ENCODE measurements at regions of chr17 and their contacts with region 1.

Region 1: DNA sequence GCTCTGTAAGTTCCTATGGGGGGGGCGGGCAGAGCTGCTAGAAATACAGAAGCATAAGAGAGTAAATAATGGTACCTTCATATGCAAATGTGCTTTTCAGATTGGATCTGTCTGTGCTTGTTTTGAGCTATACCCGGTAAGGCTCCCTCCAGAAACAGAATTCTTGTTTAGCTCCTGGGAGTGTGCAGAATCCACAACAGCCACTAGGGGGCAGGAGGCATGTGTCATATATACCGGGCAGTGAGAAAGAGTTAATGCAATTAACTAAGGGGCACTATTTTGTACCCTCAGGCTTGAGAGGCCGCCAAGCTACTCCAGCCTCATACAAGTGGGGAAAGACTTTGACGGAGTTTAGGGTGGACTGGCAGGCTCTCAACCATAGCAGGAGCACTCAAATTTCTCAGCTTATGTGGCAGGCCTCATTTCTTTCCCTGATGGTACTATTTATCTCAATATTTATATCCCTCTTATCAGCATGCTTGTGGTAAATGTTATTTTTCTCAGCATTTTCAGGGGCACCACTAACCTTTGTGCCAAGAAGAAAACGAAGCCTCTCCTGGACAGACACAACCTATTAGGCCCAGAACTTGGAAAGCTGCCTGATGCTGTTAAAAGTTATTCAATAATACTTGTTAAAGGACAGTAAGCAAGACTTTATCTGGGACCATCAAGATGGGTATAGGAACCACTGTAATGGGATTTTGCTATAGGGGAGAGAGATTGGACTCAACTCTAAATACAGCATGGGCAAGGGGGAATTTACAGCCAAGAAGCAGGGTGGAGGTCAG is 10.7 kb upstream of the CENPV start:
- DNase-seq: peak; percentile 85
- ATAC-seq: peak; percentile 98
- H3K4me3 Mint-ChIP-seq: no peak overlapping the region
- H3K27ac Mint-ChIP-seq: no peak overlapping the region
- H3K4me1 Mint-ChIP-seq: 0 out of 2 replicates have a peak, but pooled peaks cover 3% of the 10 kb centered on the region
- H3K27me3 Mint-ChIP-seq: peaks cover 3% of the 10 kb centered on the region; the same call in 1 of the 2 replicates
- CTCF ChIP-seq: peak; percentile 85

Region 2: DNA sequence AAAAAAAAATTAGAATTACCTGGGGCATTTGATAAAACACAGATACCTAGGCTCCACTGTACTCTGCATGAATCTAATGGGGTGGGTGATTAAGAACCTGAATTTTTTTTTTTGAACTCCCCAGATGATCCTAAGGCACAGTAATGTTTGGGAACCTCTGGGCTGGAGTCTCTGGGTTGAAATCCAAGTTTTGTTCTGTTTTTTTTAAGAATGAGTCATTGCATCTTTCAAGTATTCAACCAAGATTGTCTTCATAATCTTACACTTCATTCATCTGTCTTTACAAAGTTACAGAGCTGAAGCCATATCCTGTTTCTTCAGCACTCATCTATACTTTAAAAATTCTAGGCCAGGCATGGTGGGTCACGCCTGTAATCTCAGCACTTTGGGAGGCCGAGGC is 94.3 kb before region 1 on chr17:
- CTCF ChIA-PET with region 1: no interaction called
- POLR2A ChIA-PET with region 1: no interaction called
- DNase-seq: no peak
- ATAC-seq: no peak
- H3K4me3 Mint-ChIP-seq: no peak overlapping the region
- H3K27ac Mint-ChIP-seq: no peak overlapping the region
- H3K4me1 Mint-ChIP-seq: no peaks in the 10 kb centered on the region
- H3K27me3 Mint-ChIP-seq: no peaks in the 10 kb centered on the region
- CTCF ChIP-seq: no peak

Region 3: DNA sequence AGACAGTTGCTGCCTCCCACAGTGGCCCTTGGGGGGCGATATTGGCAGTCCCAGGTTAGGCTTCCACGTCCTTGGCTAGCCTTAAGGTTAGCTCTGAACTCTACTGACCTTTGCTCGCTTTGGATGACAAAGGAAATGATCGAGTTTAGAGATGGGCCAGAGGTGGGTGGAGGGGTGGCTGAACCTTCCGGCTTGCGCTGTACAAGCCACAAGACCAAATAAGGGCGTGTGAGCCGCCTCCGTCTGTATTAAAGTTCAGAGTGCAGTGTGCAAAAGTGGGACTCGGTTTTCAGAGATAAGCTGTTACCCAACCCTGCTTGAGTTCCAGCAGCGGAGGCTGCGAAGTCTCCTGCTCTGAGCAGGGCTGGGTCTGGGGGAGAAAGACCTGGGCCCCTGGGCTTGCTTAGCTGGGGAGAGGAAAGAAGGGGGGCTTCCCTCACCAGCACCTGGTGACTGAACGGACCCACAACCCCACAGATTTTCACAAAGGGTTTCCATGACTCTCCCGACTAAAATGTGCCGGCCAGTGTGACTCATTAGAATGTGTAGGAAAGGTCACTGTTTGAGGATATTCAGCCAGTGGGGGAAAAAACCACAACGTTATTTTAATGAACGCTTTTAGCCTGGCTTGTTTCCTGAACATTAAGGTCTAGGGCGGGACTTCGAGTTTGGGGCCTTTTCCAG is 77.8 kb before region 1 on chr17:
- CTCF ChIA-PET with region 1: interaction called, 17 read pairs
- POLR2A ChIA-PET with region 1: no interaction called
- DNase-seq: peak; percentile 81
- ATAC-seq: peak; percentile 99
- H3K4me3 Mint-ChIP-seq: peak overlapping the region; percentile 47
- H3K27ac Mint-ChIP-seq: no peak overlapping the region
- H3K4me1 Mint-ChIP-seq: peaks cover 18% of the 10 kb centered on the region
- H3K27me3 Mint-ChIP-seq: peaks cover 18% of the 10 kb centered on the region
- CTCF ChIP-seq: peak; percentile 56

Region 4: GRCh38 chr17:16353317-16354174 is 10.4 kb before region 1 on chr17 and contains the start of gene CENPV:
- CTCF ChIA-PET with region 1: interaction called, 64 read pairs
- POLR2A ChIA-PET with region 1: interaction called, 3 read pairs
- DNase-seq: peak; percentile 86
- ATAC-seq: peak; percentile 92
- H3K4me3 Mint-ChIP-seq: peak within 1 kb of the TSS; percentile 93
- H3K27ac Mint-ChIP-seq: peak within 1 kb of the TSS; percentile 90
- H3K4me1 Mint-ChIP-seq: peaks cover 28% of the 10 kb centered on the region
- H3K27me3 Mint-ChIP-seq: peaks cover 24% of the 10 kb centered on the region
- CTCF ChIP-seq: no peak
- total RNA-seq, gene CENPV: 151 to 152 TPM (median 151 TPM) in 3 replicates

Region 5: GRCh38 chr17:16407911-16408588 is 44.1 kb after region 1 on chr17:
- CTCF ChIA-PET with region 1: interaction called, 21 read pairs
- POLR2A ChIA-PET with region 1: interaction called, 9 read pairs
- DNase-seq: peak; percentile 60
- ATAC-seq: peak; percentile 50
- H3K4me3 Mint-ChIP-seq: peak overlapping the region; percentile 51
- H3K27ac Mint-ChIP-seq: peak overlapping the region; percentile 91
- H3K4me1 Mint-ChIP-seq: peaks cover 11% of the 10 kb centered on the region
- H3K27me3 Mint-ChIP-seq: peaks cover 6% of the 10 kb centered on the region; the same call in 1 of the 2 replicates
- CTCF ChIP-seq: no peak

Region 6: DNA sequence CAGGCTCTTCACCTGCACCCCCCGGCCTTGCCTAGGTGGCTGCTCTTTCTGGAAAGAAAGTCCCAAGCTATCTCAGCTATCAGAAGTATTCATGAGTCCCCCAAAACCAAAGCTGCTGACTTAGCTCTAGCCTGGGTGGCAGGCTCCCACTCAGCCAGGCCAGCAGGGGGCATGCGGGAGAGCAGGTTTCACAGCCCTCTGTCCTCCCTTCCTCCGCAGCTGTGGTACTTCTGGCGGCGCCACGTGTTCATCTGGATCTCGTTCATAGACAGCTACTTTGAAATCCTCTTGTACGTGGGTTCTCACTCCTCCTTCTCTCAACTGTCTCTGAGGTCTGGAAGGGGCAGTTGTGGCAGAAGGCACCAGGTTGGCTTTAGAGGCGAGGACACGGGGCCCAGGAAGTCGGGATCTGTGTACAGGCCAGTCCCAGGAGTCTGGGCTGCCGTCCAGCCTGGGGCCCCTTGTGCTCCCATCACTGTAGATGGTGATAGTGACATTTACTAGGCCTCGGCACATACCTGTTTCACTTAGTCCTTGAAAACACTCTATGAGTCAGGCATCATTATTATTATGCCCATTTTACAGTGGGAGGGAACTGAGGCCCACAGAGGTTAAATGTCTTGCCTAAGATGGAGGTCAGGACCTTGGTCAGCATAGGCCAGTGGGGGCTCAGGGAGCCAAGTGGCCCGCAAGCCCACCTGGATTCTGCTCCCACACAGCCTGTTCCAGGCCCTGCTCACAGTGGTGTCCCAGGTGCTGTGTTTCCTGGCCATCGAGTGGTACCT is 64.3 kb after region 1 on chr17:
- CTCF ChIA-PET with region 1: interaction called, 25 read pairs
- POLR2A ChIA-PET with region 1: no interaction called
- DNase-seq: peak; percentile 74
- ATAC-seq: peak; percentile 85
- H3K4me3 Mint-ChIP-seq: no peak overlapping the region
- H3K27ac Mint-ChIP-seq: no peak overlapping the region
- H3K4me1 Mint-ChIP-seq: peaks cover 4% of the 10 kb centered on the region
- H3K27me3 Mint-ChIP-seq: peaks cover 7% of the 10 kb centered on the region; the same call in 1 of the 2 replicates
- CTCF ChIP-seq: peak; percentile 27; the same call in 1 of the 2 replicates

Region 7: DNA sequence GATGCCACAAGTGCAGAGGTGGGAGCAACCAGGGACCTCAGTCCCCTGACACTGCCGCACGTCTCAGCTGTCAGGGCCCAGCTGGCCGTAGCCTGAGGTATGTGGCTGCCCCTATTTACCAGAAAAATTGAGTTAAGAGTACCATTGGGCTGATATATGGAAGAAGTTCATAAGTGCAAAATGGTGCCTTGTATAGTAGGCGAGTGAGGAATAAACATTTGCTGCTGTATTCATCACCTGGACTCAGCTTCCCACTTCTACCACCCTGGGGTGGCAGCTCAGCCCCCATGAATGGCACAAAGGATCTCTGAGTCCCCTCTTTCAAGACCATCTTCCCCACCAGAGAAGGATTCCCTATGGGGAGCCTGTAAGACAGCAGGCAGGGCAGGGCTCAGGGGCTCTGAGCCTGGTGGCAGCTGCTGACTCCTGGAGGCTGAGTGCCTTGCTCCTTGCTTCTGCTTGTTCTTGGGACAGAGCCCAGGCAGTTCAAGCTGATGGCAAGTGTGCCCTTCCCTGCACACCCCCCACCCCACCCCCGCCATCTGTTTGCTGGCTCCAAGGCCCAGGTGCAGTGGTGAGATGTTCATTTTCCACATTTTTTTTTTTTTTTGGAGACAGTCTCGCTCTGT is 80.4 kb after region 1 on chr17:
- CTCF ChIA-PET with region 1: interaction called, 19 read pairs
- POLR2A ChIA-PET with region 1: interaction called, 3 read pairs
- DNase-seq: no peak
- ATAC-seq: peak; percentile 7
- H3K4me3 Mint-ChIP-seq: no peak overlapping the region
- H3K27ac Mint-ChIP-seq: peak overlapping the region; percentile 45
- H3K4me1 Mint-ChIP-seq: peaks cover 53% of the 10 kb centered on the region
- H3K27me3 Mint-ChIP-seq: no peaks in the 10 kb centered on the region
- CTCF ChIP-seq: no peak

Region 8: DNA sequence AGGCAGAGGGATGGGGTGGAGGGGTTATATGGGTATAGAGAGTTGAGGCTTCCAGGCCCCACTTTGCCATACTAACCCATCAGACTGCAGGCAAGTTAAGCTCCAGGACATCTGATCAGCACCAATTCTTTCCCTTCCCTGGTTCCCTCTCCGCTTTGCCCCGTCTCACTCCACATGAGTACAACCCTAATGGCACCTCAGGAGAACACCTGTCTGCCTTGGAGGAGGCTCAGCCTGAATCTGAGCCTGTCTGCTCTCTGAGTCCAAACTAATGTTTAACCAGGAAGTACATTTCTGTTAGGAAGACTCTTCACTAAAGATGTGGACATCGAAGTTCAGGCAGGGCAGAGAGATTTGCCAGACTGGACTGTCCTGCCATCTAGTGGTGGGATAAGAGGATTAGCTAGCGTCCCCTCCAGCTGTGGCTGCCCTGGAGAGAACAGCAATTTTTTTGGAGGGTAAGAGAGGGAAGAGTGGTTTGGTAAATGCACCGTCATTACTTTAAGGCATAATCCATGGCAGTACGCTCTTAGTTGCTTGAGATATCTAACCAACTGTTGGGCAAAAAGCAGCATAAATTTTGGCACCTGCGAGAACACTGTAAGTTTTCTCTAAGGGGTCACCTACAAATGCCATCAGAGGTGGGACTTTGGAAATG is 157.3 kb after region 1 on chr17:
- CTCF ChIA-PET with region 1: interaction called, 25 read pairs
- POLR2A ChIA-PET with region 1: no interaction called
- DNase-seq: peak; percentile 64
- ATAC-seq: peak; percentile 87
- H3K4me3 Mint-ChIP-seq: no peak overlapping the region
- H3K27ac Mint-ChIP-seq: no peak overlapping the region
- H3K4me1 Mint-ChIP-seq: peaks cover 14% of the 10 kb centered on the region
- H3K27me3 Mint-ChIP-seq: peaks cover 20% of the 10 kb centered on the region
- CTCF ChIP-seq: peak; percentile 68

Measured in WTC11 (cell line).